Activated naive CD4-positive, alpha-beta T cell treated with anti-CD3 and anti-CD28 coated beads for 36 hours (primary cell): ENCODE measurements at regions of chr11 and their contacts with region 1.

Region 1: DNA sequence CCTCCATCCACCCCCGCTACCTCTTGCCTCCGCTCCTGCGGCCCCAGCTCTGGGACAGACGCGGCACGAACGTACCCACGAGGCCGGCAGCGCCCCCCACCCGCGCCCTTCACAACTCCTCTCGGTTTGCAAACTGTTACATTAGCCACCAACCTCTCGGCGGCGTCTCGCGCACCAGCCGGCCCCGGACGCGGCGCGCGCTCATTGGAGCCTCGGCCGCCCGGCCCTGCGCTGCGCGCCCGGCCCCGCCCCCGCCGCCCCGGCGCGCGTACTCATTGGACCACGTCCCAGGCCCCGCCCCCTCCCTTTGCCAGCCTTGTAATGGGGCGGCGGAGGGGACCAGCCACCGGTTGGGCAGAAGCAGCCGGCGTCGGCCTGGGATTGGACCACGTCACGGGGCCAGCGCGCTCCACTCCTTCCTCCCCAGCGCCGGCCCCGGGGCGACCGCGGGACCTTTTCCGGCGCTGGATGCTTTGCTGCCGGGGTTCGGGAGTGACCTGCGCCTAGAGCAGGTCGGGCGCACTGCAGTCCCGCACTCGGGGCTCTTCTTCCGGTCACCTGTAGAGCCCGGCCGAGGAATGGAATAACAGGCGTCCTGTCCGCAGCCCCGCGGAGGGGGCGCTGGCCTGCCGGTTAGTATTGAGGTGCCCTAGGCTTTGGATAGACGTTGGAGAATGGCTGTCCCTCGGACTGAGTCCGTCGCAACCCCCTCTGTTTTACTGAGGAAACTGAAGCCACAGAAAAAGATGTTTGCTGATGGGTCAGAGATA is at the start of gene HYOU1:
- DNase-seq: peak; percentile 99
- H3K4me3 Mint-ChIP-seq: peak within 1 kb of the TSS; percentile 98
- H3K27ac Mint-ChIP-seq: peak within 1 kb of the TSS; percentile 95
- H3K4me1 Mint-ChIP-seq: peaks cover 53% of the 10 kb centered on the region
- H3K27me3 Mint-ChIP-seq: no peaks in the 10 kb centered on the region
- total RNA-seq, gene HYOU1: 108 to 116 TPM

Region 2: DNA sequence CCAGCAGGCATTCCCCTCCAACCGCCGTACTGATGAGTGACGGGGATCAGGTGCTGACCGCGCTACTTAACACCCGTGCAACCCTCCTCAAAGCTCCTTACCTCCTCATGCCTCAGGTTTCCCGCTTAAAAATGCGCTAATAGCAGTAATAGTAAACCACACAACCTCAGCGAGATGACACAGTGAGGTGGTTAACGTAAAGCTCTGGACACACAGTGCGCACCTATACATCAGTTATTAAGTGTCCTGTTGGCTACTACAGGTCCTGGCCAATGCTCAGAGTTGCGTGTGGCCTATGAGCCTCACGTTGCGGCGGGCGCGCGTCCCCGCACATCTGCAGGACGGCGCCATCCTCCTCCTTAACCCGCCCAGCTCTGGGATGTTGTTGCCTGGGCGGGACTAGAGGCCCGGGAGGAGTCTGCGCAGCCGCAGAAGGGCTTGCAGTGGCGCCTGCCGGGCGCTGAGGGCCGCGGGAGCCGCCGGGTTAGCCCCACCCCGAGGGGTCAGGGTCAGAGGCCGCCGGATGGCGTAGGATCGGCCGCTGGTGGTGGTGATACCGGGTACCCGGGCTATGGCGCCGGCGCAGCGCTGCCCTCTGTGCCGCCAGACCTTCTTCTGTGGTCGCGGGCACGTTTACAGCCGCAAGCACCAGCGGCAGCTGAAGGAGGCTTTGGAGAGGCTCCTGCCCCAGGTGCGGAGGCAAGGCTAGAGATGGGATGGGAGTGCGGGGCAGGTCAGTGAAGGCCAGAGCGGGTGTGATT is 59.4 kb before region 1 on chr11 and contains the start of gene CENATAC:
- CTCF ChIA-PET with region 1: interaction called, 3 read pairs
- intact Hi-C with region 1: loop called (anchors 1 kb)
- DNase-seq: peak; percentile 98
- H3K4me3 Mint-ChIP-seq: peak within 1 kb of the TSS; percentile 88
- H3K27ac Mint-ChIP-seq: peak within 1 kb of the TSS; percentile 96
- H3K4me1 Mint-ChIP-seq: peaks cover 33% of the 10 kb centered on the region
- H3K27me3 Mint-ChIP-seq: no peaks in the 10 kb centered on the region
- total RNA-seq, gene CENATAC: 17.4 to 18.0 TPM

Region 3: DNA sequence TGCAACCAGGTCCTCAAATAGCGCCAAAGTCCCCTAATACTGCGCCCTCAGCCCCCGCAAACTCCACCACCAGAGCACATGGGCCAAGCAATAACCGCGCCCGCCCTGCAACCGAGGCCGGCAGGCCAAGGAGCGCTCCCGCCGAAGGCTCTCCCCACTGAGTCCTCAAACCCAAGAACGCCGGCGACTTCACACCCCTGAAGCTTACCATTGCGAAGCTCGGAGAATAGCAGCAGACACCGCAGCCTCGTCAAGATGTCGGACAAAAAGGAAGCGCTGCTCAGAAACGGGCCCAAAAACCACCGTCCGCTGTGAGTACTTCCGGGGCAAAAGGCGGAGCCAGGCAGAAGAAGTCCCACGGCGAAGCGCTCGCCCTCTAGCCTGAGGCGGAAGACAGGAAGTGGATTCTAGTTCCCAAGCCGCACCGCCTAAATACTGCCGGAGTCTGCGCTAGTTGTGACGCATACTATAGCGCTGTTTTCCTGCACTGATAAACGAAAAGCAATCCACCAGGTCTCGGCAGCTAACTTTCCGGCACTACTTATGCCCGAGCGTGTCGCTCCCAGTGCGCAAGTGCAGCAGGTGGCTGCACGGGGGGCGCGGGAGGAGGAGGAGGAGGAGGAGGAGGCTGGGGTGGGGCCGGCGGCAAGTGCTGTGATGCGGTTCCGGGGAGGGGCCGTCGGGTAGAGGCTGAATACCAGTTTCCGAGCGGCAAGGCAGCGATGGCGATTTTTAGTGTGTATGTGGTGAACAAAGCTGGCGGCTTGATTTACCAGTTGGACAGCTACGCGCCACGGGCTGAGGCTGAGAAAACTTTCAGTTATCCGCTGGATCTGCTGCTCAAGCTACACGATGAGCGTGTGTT is 38.9 kb before region 1 on chr11 and contains the starts of genes RPS25 and TRAPPC4:
- CTCF ChIA-PET with region 1: interaction called, 4 read pairs
- intact Hi-C with region 1: loop called (anchors 1 kb)
- DNase-seq: peak; percentile 98
- H3K4me3 Mint-ChIP-seq: peak within 1 kb of the TSS; percentile 98
- H3K27ac Mint-ChIP-seq: peak within 1 kb of the TSS; percentile 99
- H3K4me1 Mint-ChIP-seq: peaks cover 59% of the 10 kb centered on the region
- H3K27me3 Mint-ChIP-seq: no peaks in the 10 kb centered on the region
- total RNA-seq, gene RPS25: 2,183 to 2,206 TPM
- total RNA-seq, gene TRAPPC4: 66.4 to 69.9 TPM

Region 4: GRCh38 chr11:119030329-119031049 is 26.7 kb before region 1 on chr11 and contains the start of gene SLC37A4:
- CTCF ChIA-PET with region 1: interaction called, 3 read pairs
- intact Hi-C with region 1: loop called (anchors 1 kb)
- DNase-seq: peak; percentile 99
- H3K4me3 Mint-ChIP-seq: peak within 1 kb of the TSS; percentile 77
- H3K27ac Mint-ChIP-seq: peak within 1 kb of the TSS; percentile 85
- H3K4me1 Mint-ChIP-seq: peaks cover 23% of the 10 kb centered on the region
- H3K27me3 Mint-ChIP-seq: no peaks in the 10 kb centered on the region
- total RNA-seq, gene SLC37A4: 28.3 to 30.3 TPM

Region 5: GRCh38 chr11:119084663-119085436 is 27.7 kb after region 1 on chr11 and contains the start of gene HMBS:
- CTCF ChIA-PET with region 1: no interaction called
- intact Hi-C with region 1: loop called (anchors 1 kb)
- DNase-seq: peak; percentile 94
- H3K4me3 Mint-ChIP-seq: peak within 1 kb of the TSS; percentile 98
- H3K27ac Mint-ChIP-seq: peak within 1 kb of the TSS; percentile 96
- H3K4me1 Mint-ChIP-seq: peaks cover 21% of the 10 kb centered on the region
- H3K27me3 Mint-ChIP-seq: no peaks in the 10 kb centered on the region
- total RNA-seq, gene HMBS: 27.9 to 29.4 TPM

Region 6: DNA sequence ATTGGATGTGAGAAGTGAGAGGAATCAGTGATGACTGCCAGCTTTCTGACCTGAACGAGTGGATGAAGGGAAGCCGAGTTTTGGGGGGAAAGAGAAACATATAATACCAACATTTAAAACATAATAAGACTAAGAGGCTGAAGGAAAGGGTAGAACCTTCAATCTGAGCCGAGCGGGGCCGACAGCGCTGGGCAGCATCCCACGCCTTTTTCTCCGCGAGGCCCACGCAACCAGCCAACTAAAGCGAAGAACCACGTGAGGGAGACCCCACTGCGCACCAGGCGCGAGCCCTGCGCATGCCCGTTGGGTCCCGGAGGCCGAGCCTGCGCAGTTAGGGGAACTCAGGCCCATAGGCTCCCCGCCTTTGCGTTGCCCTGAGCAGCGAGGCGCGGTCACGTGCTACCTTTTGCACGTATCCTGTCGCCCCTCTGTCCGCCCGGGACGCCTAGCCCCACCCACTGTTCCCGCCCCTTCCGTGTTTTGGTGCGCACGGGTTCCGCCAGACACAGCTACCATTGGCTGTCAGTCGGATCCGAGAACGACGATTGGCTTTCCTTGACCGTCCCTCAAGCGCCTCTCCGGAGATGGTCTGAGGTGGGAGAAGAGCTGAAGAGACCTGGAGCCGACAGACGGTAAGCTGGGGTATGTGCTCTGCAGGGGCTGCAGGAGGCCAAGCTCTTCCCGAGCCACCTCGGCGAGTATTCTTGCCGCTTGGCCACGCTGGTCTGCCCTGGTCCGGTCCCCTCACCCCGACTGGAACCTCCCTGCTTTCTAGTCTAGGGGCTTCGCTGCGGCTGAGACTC is 64.0 kb after region 1 on chr11 and contains the start of gene HINFP:
- CTCF ChIA-PET with region 1: no interaction called
- intact Hi-C with region 1: loop called (anchors 2 kb)
- DNase-seq: peak; percentile 100
- H3K4me3 Mint-ChIP-seq: peak within 1 kb of the TSS; percentile 97
- H3K27ac Mint-ChIP-seq: peak within 1 kb of the TSS; percentile 80
- H3K4me1 Mint-ChIP-seq: peaks cover 27% of the 10 kb centered on the region
- H3K27me3 Mint-ChIP-seq: no peaks in the 10 kb centered on the region
- total RNA-seq, gene HINFP: 24.5 to 25.2 TPM

Region 7: DNA sequence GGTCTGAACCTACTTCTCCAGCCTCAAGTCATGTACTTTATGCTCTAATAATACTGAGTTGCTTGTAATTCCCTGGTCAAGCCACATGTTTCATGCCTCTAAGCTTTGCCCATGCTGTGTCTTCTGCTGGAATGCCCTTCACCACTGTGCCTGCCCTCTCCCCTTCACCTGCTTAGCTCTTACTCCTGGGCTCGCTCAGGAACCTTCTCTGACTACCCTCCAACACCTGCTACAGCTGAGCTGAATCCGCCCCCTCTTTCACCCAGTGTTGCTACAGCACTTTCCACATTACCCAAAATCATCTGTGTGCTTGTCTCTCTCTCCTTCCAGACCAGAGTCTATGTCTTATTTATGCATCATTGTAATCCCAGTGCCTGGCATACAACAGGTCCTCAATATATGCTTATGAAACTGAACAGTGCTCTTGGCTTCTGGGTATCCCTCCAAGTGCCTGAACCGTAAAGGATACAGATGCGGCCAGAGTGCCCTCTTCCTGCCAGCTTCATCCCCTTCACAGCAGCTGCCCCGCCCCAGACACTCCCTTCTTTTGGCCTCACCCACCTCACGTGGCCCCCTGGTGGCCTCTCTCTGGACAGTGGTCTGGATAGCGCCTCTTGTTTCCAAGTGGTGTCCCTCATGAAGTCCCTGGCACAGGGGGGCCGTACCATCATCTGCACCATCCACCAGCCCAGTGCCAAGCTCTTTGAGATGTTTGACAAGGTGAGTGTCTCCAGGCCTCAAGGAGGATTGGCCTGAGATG is 98.7 kb after region 1 on chr11:
- CTCF ChIA-PET with region 1: no interaction called
- intact Hi-C with region 1: no loop called
- DNase-seq: peak; percentile 22
- H3K4me3 Mint-ChIP-seq: no peak overlapping the region
- H3K27ac Mint-ChIP-seq: no peak overlapping the region
- H3K4me1 Mint-ChIP-seq: no peaks in the 10 kb centered on the region
- H3K27me3 Mint-ChIP-seq: peaks cover 2% of the 10 kb centered on the region

Region 8: GRCh38 chr11:119196833-119197483 is 139.8 kb after region 1 on chr11:
- CTCF ChIA-PET with region 1: interaction called, 5 read pairs
- intact Hi-C with region 1: loop called (anchors 2 kb)
- DNase-seq: peak; percentile 88
- H3K4me3 Mint-ChIP-seq: no peak overlapping the region
- H3K27ac Mint-ChIP-seq: no peak overlapping the region
- H3K4me1 Mint-ChIP-seq: no peaks in the 10 kb centered on the region
- H3K27me3 Mint-ChIP-seq: no peaks in the 10 kb centered on the region

Region 9: GRCh38 chr11:119432484-119433357 is 375.5 kb after region 1 on chr11:
- CTCF ChIA-PET with region 1: no interaction called
- intact Hi-C with region 1: no loop called
- DNase-seq: no peak
- H3K4me3 Mint-ChIP-seq: no peak overlapping the region
- H3K27ac Mint-ChIP-seq: no peak overlapping the region
- H3K4me1 Mint-ChIP-seq: no peaks in the 10 kb centered on the region
- H3K27me3 Mint-ChIP-seq: peaks cover 21% of the 10 kb centered on the region

Region 10: GRCh38 chr11:119634301-119634700 is 577.1 kb after region 1 on chr11:
- CTCF ChIA-PET with region 1: no interaction called
- intact Hi-C with region 1: no loop called
- DNase-seq: no peak
- H3K4me3 Mint-ChIP-seq: no peak overlapping the region
- H3K27ac Mint-ChIP-seq: no peak overlapping the region
- H3K4me1 Mint-ChIP-seq: no peaks in the 10 kb centered on the region
- H3K27me3 Mint-ChIP-seq: peaks cover 1% of the 10 kb centered on the region